Activated CD8-positive, alpha-beta memory T cell treated with anti-CD3 and anti-CD28 coated beads, Interleukin-2, amount 10 ng/mL, durations not matched to agents 7 days and 5 days (primary cell): ENCODE measurements at regions of chr17 and their contacts with region 1.

Region 1: GRCh38 chr17:73710095-73710592 is 65.9 kb upstream of the SDK2 start:
- DNase-seq: peak; percentile 76
- ATAC-seq: peak; percentile 74
- H3K4me3 Mint-ChIP-seq: no peak overlapping the region
- H3K27ac Mint-ChIP-seq: peak overlapping the region; percentile 41
- H3K4me1 Mint-ChIP-seq: peaks cover 13% of the 10 kb centered on the region
- H3K27me3 Mint-ChIP-seq: peaks cover 31% of the 10 kb centered on the region

Region 2: GRCh38 chr17:73429440-73430164 is 280.5 kb before region 1 on chr17:
- CTCF ChIA-PET with region 1: interaction called, 55 read pairs
- DNase-seq: peak; percentile 89
- ATAC-seq: peak; percentile 98
- H3K4me3 Mint-ChIP-seq: no peak overlapping the region
- H3K27ac Mint-ChIP-seq: no peak overlapping the region
- H3K4me1 Mint-ChIP-seq: peaks cover 15% of the 10 kb centered on the region
- H3K27me3 Mint-ChIP-seq: peaks cover 3% of the 10 kb centered on the region

Region 3: GRCh38 chr17:73645050-73645978 is 64.8 kb before region 1 on chr17:
- CTCF ChIA-PET with region 1: interaction called, 12 read pairs
- DNase-seq: no peak
- ATAC-seq: peak; percentile 63
- H3K4me3 Mint-ChIP-seq: no peak overlapping the region
- H3K27ac Mint-ChIP-seq: no peak overlapping the region
- H3K4me1 Mint-ChIP-seq: peaks cover 16% of the 10 kb centered on the region
- H3K27me3 Mint-ChIP-seq: peaks cover 69% of the 10 kb centered on the region

Region 4: DNA sequence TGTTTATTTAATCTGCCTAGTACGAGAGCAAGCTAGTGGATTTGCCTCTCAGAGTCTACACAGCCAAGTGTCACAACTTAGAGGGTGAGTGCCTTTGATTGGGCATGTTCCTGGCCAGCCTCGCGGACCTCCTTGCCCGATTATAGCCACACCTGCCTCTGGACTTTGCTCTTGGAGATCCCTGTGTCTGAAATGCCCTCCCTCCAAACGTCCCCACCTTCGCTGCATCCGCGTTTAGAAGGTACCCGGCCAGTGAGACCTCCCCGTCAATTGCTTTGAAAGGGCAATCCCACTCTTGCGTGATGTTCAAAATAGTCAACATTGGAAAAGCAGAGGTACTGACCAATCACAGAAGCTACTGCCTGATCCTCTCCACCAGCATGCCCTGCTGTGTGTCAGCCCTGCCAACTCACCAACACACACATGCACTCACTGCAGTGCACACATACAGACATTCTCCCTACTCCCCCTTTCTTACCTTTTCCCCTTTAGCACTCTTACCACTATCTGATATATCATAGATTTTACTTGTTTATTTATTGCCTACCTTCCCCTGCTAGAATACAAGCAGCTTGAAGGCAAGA is 59.4 kb before region 1 on chr17:
- CTCF ChIA-PET with region 1: interaction called, 12 read pairs
- DNase-seq: peak; percentile 36
- ATAC-seq: no peak
- H3K4me3 Mint-ChIP-seq: no peak overlapping the region
- H3K27ac Mint-ChIP-seq: no peak overlapping the region
- H3K4me1 Mint-ChIP-seq: peaks cover 6% of the 10 kb centered on the region
- H3K27me3 Mint-ChIP-seq: peaks cover 49% of the 10 kb centered on the region

Region 5: DNA sequence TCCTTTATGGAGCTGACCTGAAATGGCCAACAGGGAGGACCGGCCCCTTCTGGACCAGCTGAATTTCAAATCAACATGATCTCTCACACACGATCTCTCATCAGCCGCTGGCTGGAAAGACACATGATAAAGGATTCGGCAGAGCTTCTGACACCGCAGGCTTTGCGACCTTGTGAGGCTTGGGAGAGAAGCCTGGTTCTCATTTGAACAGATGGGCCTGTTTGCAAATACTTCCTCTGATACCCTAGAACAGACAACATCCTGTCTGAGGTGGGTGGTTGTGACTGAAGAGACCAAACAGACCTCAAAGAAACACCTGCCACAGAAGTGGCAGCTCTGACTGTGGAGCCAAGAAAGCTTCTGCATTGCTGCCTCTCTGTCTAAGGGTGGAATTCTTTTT is 12.0 kb after region 1 on chr17:
- CTCF ChIA-PET with region 1: interaction called, 25 read pairs
- DNase-seq: peak; percentile 82
- ATAC-seq: peak; percentile 90
- H3K4me3 Mint-ChIP-seq: no peak overlapping the region
- H3K27ac Mint-ChIP-seq: peak overlapping the region; percentile 42
- H3K4me1 Mint-ChIP-seq: peaks cover 20% of the 10 kb centered on the region
- H3K27me3 Mint-ChIP-seq: peaks cover 4% of the 10 kb centered on the region